Activated B cell treated with CpG ODN at 0.5 μM for 24 hours (primary cell): ENCODE measurements at regions of chr17 and their contacts with region 1.

Region 1: GRCh38 chr17:49739641-49740271 is 24.2 kb downstream of the FAM117A start:
- DNase-seq: peak; percentile 75
- ATAC-seq: peak; percentile 91
- H3K4me3 Mint-ChIP-seq: peak overlapping the region; percentile 81
- H3K27ac Mint-ChIP-seq: peak overlapping the region; percentile 99
- H3K4me1 Mint-ChIP-seq: peaks cover 87% of the 10 kb centered on the region
- H3K27me3 Mint-ChIP-seq: no peaks in the 10 kb centered on the region
- CTCF ChIP-seq: no peak

Region 2: GRCh38 chr17:49365667-49366066 is 374.1 kb before region 1 on chr17:
- CTCF ChIA-PET with region 1: no interaction called
- POLR2A ChIA-PET with region 1: no interaction called
- intact Hi-C with region 1: no loop called
- DNase-seq: no peak
- ATAC-seq: no peak
- H3K4me3 Mint-ChIP-seq: no peak overlapping the region
- H3K27ac Mint-ChIP-seq: peak overlapping the region; percentile 78
- H3K4me1 Mint-ChIP-seq: peaks cover 47% of the 10 kb centered on the region
- H3K27me3 Mint-ChIP-seq: no peaks in the 10 kb centered on the region
- CTCF ChIP-seq: no peak

Region 3: GRCh38 chr17:49471089-49471683 is 268.6 kb before region 1 on chr17:
- CTCF ChIA-PET with region 1: no interaction called
- POLR2A ChIA-PET with region 1: no interaction called
- intact Hi-C with region 1: no loop called
- DNase-seq: no peak
- ATAC-seq: no peak
- H3K4me3 Mint-ChIP-seq: no peak overlapping the region
- H3K27ac Mint-ChIP-seq: no peak overlapping the region
- H3K4me1 Mint-ChIP-seq: no peaks in the 10 kb centered on the region
- H3K27me3 Mint-ChIP-seq: peaks cover 62% of the 10 kb centered on the region
- CTCF ChIP-seq: no peak

Region 4: DNA sequence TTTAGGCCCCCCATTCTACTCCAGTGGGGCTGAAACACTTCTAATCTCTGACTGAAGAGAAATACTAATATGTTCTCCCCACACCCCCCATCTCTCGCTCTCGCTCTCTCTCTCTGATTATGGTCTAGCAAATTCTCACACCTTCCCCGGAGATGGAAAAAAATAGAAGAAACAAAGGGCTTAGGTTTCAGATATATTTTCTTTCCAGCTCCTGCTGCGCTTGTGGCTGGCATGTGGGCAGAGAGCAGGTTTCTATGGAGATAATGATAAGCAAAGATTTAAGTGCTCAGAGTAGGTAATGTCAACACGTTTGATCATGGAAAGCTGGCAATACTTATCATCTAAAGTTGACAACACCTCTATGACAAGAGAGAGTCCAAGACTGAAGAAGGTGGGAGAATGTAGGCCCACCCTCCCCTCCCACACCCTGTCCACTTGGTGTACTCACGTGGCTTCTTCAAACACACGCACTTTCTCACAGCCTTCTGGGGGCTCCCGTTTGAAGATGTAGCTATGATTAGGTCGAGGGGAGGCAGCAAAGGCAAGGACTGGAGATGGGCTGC is 24.0 kb before region 1 on chr17:
- CTCF ChIA-PET with region 1: no interaction called
- POLR2A ChIA-PET with region 1: no interaction called
- intact Hi-C with region 1: no loop called
- DNase-seq: no peak
- ATAC-seq: no peak
- H3K4me3 Mint-ChIP-seq: no peak overlapping the region
- H3K27ac Mint-ChIP-seq: peak overlapping the region; percentile 35
- H3K4me1 Mint-ChIP-seq: peaks cover 14% of the 10 kb centered on the region
- H3K27me3 Mint-ChIP-seq: no peaks in the 10 kb centered on the region
- CTCF ChIP-seq: no peak

Region 5: GRCh38 chr17:49753959-49754391 is 14.2 kb after region 1 on chr17:
- CTCF ChIA-PET with region 1: interaction called, 3 read pairs
- POLR2A ChIA-PET with region 1: interaction called, 17 read pairs
- intact Hi-C with region 1: loop called (anchors 2 kb)
- DNase-seq: no peak
- ATAC-seq: no peak
- H3K4me3 Mint-ChIP-seq: no peak overlapping the region
- H3K27ac Mint-ChIP-seq: peak overlapping the region; percentile 18
- H3K4me1 Mint-ChIP-seq: peaks cover 60% of the 10 kb centered on the region
- H3K27me3 Mint-ChIP-seq: no peaks in the 10 kb centered on the region
- CTCF ChIP-seq: no peak

Region 6: DNA sequence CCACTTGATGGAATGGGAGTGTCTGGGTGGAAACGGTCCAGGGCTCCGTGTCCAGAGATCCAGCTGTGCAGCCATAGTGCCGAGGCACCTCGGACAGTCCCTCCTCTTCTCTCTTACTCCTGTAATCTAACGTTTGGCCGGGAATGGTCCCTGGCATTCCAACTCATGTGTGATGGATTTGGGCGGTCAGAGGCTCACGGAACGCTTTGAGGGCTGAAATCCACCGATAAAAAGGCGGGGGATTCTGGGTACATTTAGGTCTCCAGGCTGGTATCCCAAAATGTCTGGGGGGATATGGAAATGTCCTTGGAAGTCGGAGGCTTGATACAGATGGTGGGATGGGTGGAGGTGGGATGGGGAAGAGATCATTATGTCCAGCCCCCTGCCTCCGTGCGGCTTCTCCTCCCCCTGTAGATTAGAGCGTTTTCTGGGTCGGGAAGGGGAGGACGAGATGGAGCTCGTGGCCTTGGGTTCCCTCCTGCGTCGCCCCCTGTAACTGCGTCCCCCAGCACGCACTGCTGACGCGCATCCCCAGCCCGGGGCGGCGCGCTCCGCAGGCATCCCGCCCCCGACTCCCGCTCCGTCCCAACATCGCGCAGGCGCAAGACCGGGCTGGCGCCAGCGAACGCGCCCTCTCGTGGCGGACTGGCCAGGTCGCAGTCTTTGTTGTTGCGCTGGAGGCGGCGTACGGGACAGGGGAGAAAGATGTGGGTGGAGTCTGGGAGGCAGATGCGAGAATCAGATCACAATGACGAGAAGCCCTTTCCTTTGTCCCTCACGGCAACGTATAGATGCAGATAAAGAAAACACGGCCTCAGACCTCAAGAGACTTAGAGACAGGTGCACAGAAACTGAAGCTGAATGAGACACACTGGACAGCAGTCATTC is 421.5 kb after region 1 on chr17:
- CTCF ChIA-PET with region 1: no interaction called
- POLR2A ChIA-PET with region 1: no interaction called
- intact Hi-C with region 1: no loop called
- DNase-seq: peak; percentile 89
- ATAC-seq: peak; percentile 95
- H3K4me3 Mint-ChIP-seq: peak overlapping the region; percentile 73
- H3K27ac Mint-ChIP-seq: peak overlapping the region; percentile 42
- H3K4me1 Mint-ChIP-seq: peaks cover 48% of the 10 kb centered on the region
- H3K27me3 Mint-ChIP-seq: no peaks in the 10 kb centered on the region
- CTCF ChIP-seq: peak; percentile 68